Posterior cingulate gyrus (tissue), 11 donors: ENCODE measurements at regions of chr22 and their contacts with region 1.

Region 1: GRCh38 chr22:17492247-17492646 is 71.1 kb upstream of the SLC25A18 start:
- DNase-seq: peak in 3 of 10 donors; percentile 12 to 52 (median 14)

Region 2: GRCh38 chr22:17443405-17444203 is 48.6 kb before region 1 on chr22:
- intact Hi-C with region 1: loop called (anchors 10 kb)
- DNase-seq: no peak